ENCODE measurements at regions of chr10 and their contacts with region 1.

Region 1: GRCh38 chr10:116490028-116490662 is 55.6 kb upstream of the PNLIP start:
- DNase-seq: peak; percentile 45
- H3K4me3 Mint-ChIP-seq: no peak overlapping the region
- H3K27ac Mint-ChIP-seq: no peak overlapping the region
- H3K4me1 Mint-ChIP-seq: no peaks in the 10 kb centered on the region
- H3K27me3 Mint-ChIP-seq: no peaks in the 10 kb centered on the region
- CTCF ChIP-seq: peak; percentile 53

Region 2: GRCh38 chr10:115222039-115222438 is 1268.1 kb before region 1 on chr10:
- CTCF ChIA-PET with region 1: interaction called, 10 read pairs
- POLR2A ChIA-PET with region 1: no interaction called
- intact Hi-C with region 1: no loop called
- DNase-seq: no peak
- H3K4me3 Mint-ChIP-seq: no peak overlapping the region
- H3K27ac Mint-ChIP-seq: no peak overlapping the region
- H3K4me1 Mint-ChIP-seq: no peaks in the 10 kb centered on the region
- H3K27me3 Mint-ChIP-seq: peaks cover 65% of the 10 kb centered on the region
- CTCF ChIP-seq: no peak

Region 3: DNA sequence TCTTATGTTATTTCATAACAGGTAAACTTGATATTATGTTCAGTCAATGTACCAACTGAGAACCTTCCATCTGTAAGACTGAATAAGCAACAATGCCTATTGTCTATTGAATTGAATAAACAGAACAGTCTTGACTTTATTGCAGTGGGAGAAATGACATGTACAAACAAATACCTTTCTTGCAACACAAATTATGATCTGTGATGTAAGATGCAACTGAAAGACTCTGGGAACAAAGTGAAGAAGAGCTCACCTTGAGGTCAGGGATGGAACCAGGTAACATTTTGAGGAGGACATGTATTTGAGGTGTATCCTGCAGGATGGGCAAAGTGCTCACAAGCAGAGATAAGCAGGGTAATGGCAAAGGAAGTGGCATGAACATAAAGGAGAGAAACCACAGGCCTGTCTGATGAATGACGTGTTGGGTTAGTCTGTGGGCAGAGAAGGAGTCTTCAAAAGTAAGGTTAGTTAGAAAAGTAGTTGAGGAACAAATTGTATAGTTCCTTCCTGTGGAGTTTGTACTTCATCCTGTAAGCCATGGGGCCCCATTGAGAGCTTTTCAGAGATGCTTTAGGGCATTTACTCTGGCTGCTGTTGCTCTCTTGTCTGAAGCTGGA is 53.0 kb before region 1 on chr10:
- CTCF ChIA-PET with region 1: interaction called, 3 read pairs
- POLR2A ChIA-PET with region 1: no interaction called
- intact Hi-C with region 1: loop called (anchors 2 kb)
- DNase-seq: peak; percentile 34
- H3K4me3 Mint-ChIP-seq: no peak overlapping the region
- H3K27ac Mint-ChIP-seq: peak overlapping the region; percentile 1
- H3K4me1 Mint-ChIP-seq: peaks cover 45% of the 10 kb centered on the region
- H3K27me3 Mint-ChIP-seq: no peaks in the 10 kb centered on the region
- CTCF ChIP-seq: no peak

Region 4: GRCh38 chr10:116470768-116471415 is 19.3 kb before region 1 on chr10:
- CTCF ChIA-PET with region 1: interaction called, 6 read pairs
- POLR2A ChIA-PET with region 1: interaction called, 3 read pairs
- intact Hi-C with region 1: loop called (anchors 2 kb)
- DNase-seq: peak; percentile 58
- H3K4me3 Mint-ChIP-seq: no peak overlapping the region
- H3K27ac Mint-ChIP-seq: peak overlapping the region; percentile 54
- H3K4me1 Mint-ChIP-seq: peaks cover 10% of the 10 kb centered on the region
- H3K27me3 Mint-ChIP-seq: no peaks in the 10 kb centered on the region
- CTCF ChIP-seq: peak; percentile 46

Region 5: DNA sequence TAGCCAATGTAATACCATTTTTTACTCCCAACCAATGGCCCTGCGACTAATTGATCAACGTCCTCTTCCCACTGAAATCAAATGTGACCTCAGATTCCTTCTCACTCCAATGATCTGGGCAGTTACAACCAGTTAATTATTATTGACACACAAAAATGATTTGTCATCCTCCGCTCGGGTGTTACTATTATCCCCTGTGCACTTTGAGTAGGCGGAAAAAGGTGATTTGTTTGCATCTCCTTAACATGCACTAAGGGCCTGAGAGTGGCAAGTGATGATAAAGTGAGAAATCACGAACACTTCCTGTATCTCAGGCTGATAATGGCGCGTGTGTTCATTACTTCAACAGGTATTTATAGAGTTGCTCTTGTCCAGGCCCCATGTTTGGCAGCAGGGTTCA is 14.6 kb after region 1 on chr10:
- CTCF ChIA-PET with region 1: interaction called, 19 read pairs
- POLR2A ChIA-PET with region 1: no interaction called
- intact Hi-C with region 1: no loop called
- DNase-seq: no peak
- H3K4me3 Mint-ChIP-seq: no peak overlapping the region
- H3K27ac Mint-ChIP-seq: no peak overlapping the region
- H3K4me1 Mint-ChIP-seq: no peaks in the 10 kb centered on the region
- H3K27me3 Mint-ChIP-seq: no peaks in the 10 kb centered on the region
- CTCF ChIP-seq: no peak

Region 6: GRCh38 chr10:116511365-116511764 is 21.2 kb after region 1 on chr10:
- CTCF ChIA-PET with region 1: interaction called, 19 read pairs
- POLR2A ChIA-PET with region 1: no interaction called
- intact Hi-C with region 1: no loop called
- DNase-seq: no peak
- H3K4me3 Mint-ChIP-seq: no peak overlapping the region
- H3K27ac Mint-ChIP-seq: no peak overlapping the region
- H3K4me1 Mint-ChIP-seq: no peaks in the 10 kb centered on the region
- H3K27me3 Mint-ChIP-seq: no peaks in the 10 kb centered on the region
- CTCF ChIP-seq: no peak

Region 7: GRCh38 chr10:116748041-116748440 is 257.9 kb after region 1 on chr10:
- CTCF ChIA-PET with region 1: no interaction called
- POLR2A ChIA-PET with region 1: no interaction called
- intact Hi-C with region 1: no loop called
- DNase-seq: peak; percentile 78
- H3K4me3 Mint-ChIP-seq: no peak overlapping the region
- H3K27ac Mint-ChIP-seq: peak overlapping the region; percentile 70
- H3K4me1 Mint-ChIP-seq: peaks cover 23% of the 10 kb centered on the region
- H3K27me3 Mint-ChIP-seq: no peaks in the 10 kb centered on the region
- CTCF ChIP-seq: no peak

Measured in MCF 10A (cell line).